ENCODE measurements at regions of chr10 and their contacts with region 1.

Region 1: DNA sequence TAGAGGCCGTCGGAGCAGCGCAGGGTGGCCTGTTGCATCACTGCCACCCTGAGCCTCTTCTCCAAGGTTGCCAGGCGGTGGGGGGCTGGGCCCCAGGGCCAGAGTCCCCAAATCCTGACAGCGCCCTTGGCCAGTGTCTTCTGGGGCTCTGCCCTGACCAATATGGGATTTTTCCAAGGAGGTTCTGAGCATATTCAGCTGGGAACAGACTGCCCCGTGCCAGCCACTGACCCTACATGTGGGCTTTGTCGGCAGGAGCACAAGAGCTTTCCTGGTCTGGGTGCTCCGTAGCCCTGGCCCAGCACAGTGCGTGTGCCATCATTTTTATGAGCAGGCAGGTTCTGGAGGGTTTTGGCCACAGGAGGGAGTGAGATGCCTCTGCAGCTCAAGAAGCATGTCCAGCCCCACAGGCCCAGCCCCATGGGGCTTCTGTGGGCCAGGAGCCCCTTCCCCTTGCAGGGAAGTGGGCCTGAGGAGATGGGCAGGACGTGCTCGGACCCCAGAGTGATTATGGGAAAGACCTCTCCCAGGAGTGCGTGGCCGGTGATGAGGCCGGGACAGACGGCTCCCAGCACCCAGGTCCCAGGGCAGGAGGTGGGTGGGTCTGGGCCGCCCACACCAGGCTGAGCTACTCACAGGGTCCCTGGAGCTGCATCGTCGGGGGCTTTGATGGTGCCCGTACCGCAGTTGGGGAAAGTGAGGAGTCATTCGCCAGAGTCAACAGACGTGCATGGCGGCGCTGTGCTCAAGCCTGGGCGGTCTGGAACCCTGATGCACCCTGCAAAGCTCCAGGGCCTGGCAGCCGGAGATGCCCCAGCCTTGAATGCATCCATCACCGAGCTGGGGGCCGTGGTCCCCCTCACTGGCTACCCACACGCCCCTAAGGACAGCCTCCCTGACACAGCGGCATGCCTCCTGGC is 66.6 kb downstream of the PWWP2B start:
- DNase-seq: no peak
- H3K4me3 ChIP-seq: no peak overlapping the region
- H3K4me1 ChIP-seq: no peaks in the 10 kb centered on the region
- H3K27me3 ChIP-seq: no peaks in the 10 kb centered on the region

Region 2: DNA sequence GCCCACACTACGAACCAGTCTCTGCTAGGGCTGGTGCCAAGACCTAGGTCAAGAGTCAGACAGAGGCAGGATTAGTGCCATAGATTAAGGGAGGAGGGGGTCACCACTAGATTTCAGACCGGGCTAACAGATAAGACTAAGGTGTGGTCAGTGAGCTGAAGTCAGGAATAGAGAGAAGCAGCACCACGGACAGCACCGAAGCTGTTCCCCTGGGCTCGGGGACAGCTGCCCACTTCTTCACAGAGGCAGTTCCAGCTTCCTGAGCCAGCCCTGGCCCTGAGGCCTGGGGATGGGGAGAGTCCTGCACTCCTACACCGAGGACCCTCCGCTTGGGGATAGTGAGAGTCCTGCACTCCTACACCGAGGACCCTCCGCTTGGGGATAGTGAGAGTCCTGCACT is 409.0 kb before region 1 on chr10:
- in situ Hi-C with region 1: no loop called
- DNase-seq: peak in 1 of 2 experiments; percentile 34
- H3K4me3 ChIP-seq: no peak overlapping the region
- H3K4me1 ChIP-seq: no peaks in the 10 kb centered on the region
- H3K27me3 ChIP-seq: 0 out of 2 replicates have a peak, but pooled peaks cover 5% of the 10 kb centered on the region

Region 3: GRCh38 chr10:132185601-132186487 is 277.7 kb before region 1 on chr10:
- in situ Hi-C with region 1: no loop called
- DNase-seq: peak in 1 of 2 experiments; percentile 65
- H3K4me3 ChIP-seq: peak overlapping the region; percentile 37
- H3K4me1 ChIP-seq: no peaks in the 10 kb centered on the region
- H3K27me3 ChIP-seq: peaks cover 9% of the 10 kb centered on the region; the same call in 1 of the 2 replicates

Region 4: GRCh38 chr10:132331526-132332432 is 131.8 kb before region 1 on chr10 and contains the start of gene LRRC27:
- in situ Hi-C with region 1: no loop called
- DNase-seq: peak; percentile 94 to 99
- H3K4me3 ChIP-seq: peak within 1 kb of the TSS; percentile 76
- H3K4me1 ChIP-seq: peaks cover 28% of the 10 kb centered on the region
- H3K27me3 ChIP-seq: no peaks in the 10 kb centered on the region

Region 5: GRCh38 chr10:132637477-132638129 is 174.0 kb after region 1 on chr10:
- in situ Hi-C with region 1: loop called (anchors 5 kb)
- DNase-seq: peak; percentile 47 to 72
- H3K4me3 ChIP-seq: no peak overlapping the region
- H3K4me1 ChIP-seq: no peaks in the 10 kb centered on the region
- H3K27me3 ChIP-seq: no peaks in the 10 kb centered on the region

Measured in HAP-1 (cell line).